Panc1 (cell line): ENCODE measurements at regions of chr9 and their contacts with region 1.

Region 1: GRCh38 chr9:3553076-3553765 is 27.4 kb upstream of the RFX3 start:
- DNase-seq: no peak
- ATAC-seq: no peak
- H3K4me3 ChIP-seq: no peak overlapping the region
- H3K27ac ChIP-seq: no peak overlapping the region
- H3K4me1 ChIP-seq: no peaks in the 10 kb centered on the region
- H3K27me3 ChIP-seq: no peaks in the 10 kb centered on the region
- CTCF ChIP-seq: no peak

Region 2: GRCh38 chr9:3008091-3008490 is 545.1 kb before region 1 on chr9:
- CTCF ChIA-PET with region 1: no interaction called
- POLR2A ChIA-PET with region 1: interaction called, 10 read pairs
- in situ Hi-C with region 1: no loop called
- intact Hi-C with region 1: no loop called
- DNase-seq: no peak
- ATAC-seq: no peak
- H3K4me3 ChIP-seq: no peak overlapping the region
- H3K27ac ChIP-seq: no peak overlapping the region
- H3K4me1 ChIP-seq: no peaks in the 10 kb centered on the region
- H3K27me3 ChIP-seq: no peaks in the 10 kb centered on the region
- CTCF ChIP-seq: no peak

Region 3: GRCh38 chr9:3585606-3586005 is 32.4 kb after region 1 on chr9:
- CTCF ChIA-PET with region 1: no interaction called
- POLR2A ChIA-PET with region 1: no interaction called
- in situ Hi-C with region 1: no loop called
- intact Hi-C with region 1: no loop called
- DNase-seq: no peak
- ATAC-seq: no peak
- H3K4me3 ChIP-seq: no peak overlapping the region
- H3K27ac ChIP-seq: no peak overlapping the region
- H3K4me1 ChIP-seq: no peaks in the 10 kb centered on the region
- H3K27me3 ChIP-seq: no peaks in the 10 kb centered on the region
- CTCF ChIP-seq: no peak

Region 4: DNA sequence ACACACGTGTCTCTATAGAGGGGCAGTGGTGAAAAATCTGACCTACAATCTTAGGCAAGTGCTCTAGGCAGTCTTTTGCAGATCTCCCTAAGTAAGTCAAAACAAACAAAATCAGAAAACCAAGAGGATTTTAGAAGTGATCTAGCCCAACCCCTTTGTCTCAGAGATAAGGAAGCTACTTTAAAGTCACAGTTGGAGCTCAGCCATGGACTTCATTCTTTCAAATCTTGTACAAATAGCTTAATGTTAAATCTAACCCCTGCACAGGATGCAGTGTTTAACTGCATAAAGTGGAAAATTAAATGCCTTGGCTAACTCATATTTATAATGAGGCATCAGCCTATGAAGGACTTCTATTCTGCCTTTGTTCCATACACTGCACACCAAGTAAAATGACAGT is 107.7 kb after region 1 on chr9:
- CTCF ChIA-PET with region 1: no interaction called
- POLR2A ChIA-PET with region 1: no interaction called
- in situ Hi-C with region 1: no loop called
- intact Hi-C with region 1: no loop called
- DNase-seq: no peak
- ATAC-seq: no peak
- H3K4me3 ChIP-seq: no peak overlapping the region
- H3K27ac ChIP-seq: no peak overlapping the region
- H3K4me1 ChIP-seq: no peaks in the 10 kb centered on the region
- H3K27me3 ChIP-seq: no peaks in the 10 kb centered on the region
- CTCF ChIP-seq: no peak

Region 5: DNA sequence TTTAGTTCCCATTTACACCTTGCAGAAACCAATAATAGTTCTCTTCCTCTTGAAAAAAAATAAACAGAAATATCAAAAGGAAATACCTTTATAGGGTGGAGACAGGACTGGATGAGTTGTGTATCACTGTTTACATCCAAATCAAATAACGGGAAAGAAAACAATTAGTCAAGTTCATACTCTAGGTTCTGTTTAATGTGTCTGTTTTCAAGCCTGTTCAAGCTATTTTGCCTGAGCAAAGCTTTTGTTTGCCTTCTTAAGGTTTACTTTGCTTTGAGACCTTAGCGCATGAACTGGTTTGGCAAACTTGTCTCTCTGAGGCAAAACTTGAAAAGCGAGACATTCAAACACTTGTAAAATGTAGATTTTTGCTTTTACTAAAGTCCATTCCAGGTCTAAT is 146.6 kb after region 1 on chr9:
- CTCF ChIA-PET with region 1: no interaction called
- POLR2A ChIA-PET with region 1: no interaction called
- in situ Hi-C with region 1: no loop called
- intact Hi-C with region 1: no loop called
- DNase-seq: no peak
- ATAC-seq: no peak
- H3K4me3 ChIP-seq: no peak overlapping the region
- H3K27ac ChIP-seq: no peak overlapping the region
- H3K4me1 ChIP-seq: no peaks in the 10 kb centered on the region
- H3K27me3 ChIP-seq: no peaks in the 10 kb centered on the region
- CTCF ChIP-seq: no peak